Right ventricle myocardium inferior (tissue), 1 donor: ENCODE measurements at regions of chr20 and their contacts with region 1.

Region 1: DNA sequence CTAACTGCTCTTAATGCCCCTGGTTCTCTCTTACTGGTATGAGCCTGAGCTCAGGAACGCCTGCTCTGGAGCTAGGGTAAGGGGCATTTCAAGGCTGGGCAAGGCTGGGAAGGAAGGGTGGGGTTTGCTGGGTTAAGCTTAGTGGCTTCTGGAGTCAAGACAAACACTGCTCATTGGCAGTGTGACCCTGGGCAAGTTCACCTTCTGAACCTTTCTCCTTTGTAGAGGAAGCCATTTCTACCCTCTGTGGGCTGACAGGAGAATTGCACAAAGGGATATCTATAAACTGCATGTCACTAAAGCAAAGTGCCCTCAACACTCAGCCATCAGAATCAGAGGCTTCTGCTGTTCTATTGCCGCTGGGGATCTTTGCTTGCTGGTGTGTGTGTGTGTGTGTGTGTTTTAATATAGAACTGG is 20.3 kb upstream of the LRRN4 start:
- DNase-seq: no peak
- ATAC-seq: peak; percentile 81

Region 2: DNA sequence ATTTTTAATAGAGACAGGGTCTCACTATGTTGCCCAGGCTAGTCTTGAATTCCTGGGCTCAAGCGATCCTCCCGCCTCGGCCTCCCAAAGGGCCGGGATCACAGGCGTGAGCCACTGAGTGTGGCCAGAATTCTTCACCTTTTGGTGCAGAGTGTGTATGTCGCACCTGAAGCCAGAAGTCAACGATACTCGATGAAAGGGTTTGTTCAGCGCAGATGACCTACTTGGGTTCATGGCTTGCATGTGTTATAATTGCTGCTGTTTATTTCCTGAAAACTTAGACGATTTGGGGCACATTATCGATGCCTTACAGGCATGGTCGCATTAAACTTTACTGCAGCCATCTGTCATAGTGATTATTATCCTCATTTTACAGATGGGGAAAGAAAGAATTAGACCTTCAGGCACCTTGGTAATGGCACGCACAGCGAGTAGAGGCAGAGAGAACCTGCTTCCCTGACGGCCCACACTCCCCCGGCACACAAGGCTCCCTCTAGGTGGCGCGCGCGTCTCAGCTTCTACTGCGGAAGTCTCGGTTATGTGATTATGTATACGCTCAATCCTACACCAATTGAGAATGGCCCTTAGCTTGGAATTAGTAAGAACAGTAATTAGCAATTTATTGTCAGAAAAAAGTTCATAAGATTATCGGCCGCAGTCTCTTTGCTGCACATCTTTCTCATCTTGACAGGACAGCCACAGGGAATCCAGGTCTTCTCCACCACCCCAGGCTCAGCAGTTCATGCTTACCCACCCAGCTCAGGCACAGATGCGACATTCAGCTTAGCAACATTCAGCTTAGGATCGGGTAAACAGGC is 544.6 kb before region 1 on chr20:
- intact Hi-C with region 1: loop called (anchors 1 kb)
- DNase-seq: peak; percentile 93
- ATAC-seq: peak; percentile 87

Region 3: DNA sequence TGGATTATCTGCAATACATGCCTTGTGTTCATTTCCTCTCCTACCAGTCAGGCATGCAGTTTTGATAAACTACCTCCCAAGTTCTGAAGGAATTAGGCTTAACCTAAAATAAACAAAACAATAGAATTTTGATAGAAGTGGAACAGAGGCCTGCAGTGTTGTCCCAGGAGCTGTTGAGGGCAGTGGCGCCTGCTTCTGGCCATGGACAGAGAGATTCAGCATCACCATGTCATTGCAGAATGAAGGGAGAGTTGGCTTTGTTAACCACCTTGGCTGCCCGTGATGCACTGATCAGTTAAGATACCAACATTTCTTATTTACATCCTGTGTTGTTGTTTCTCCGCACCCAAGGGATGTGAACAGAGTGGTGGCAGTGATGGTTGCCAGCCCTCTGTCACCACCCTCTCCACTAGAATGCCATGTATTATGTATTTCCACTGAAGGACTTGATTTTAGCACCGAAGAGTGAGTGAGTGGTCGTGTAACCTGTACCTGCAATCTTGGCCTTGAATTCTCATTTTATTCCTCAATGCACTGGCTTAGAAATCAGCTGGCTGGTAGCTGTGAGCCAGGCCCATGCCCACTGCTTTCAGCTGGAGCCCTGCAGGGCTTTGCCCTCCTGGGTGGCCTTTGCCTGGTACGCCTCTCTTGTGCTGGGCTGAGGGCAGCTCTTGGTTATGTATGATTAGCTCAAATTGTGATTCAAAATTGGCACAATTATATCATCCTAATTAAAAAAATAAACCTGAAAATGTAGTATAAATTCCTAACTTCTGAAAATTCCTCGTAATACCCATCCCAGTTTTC is 267.5 kb before region 1 on chr20:
- intact Hi-C with region 1: loop called (anchors 10 kb)
- DNase-seq: no peak
- ATAC-seq: peak; percentile 70

Region 4: DNA sequence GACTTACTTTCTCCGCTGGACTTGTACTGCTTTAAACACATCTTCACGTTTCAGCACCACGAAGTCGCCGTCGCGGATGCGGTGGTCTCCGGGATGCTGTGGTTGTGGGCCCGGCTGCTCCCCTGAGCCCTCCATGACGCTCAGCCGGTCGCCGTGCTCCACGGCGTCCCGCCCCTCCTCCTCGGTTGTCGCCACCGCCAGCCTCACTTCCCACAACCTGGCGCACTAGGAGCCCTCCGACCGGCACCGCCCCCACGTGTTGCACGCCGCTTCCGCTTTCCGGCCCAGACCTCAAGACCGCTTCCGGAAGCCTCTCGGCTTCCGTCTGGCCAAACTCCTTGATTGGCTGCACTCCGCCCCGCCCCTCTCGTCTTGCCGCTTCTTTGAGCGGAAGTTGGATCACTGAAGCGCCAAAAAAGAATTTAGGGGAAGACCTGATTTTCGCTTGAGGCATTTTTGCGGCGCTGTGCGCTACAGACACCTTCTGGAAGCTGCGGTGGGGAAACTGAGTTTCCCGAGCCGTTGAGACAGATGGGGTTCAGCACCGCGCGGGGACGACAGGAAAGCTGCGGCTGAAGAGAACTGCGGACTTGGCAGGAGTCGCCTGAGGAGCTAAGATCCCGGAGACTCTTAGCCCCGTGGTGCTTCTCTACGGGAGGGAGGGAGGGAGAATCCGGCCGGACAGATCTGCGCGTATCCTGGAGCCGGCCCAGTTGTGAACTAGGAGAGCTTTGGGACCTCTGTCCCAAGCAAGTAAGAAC is 123.7 kb before region 1 on chr20 and contains the starts of genes MCM8 and TRMT6:
- intact Hi-C with region 1: loop called (anchors 1 kb)
- DNase-seq: peak; percentile 99
- ATAC-seq: peak; percentile 99
- total RNA-seq, gene MCM8: 6.4 TPM
- total RNA-seq, gene TRMT6: 6.1 TPM

Region 5: DNA sequence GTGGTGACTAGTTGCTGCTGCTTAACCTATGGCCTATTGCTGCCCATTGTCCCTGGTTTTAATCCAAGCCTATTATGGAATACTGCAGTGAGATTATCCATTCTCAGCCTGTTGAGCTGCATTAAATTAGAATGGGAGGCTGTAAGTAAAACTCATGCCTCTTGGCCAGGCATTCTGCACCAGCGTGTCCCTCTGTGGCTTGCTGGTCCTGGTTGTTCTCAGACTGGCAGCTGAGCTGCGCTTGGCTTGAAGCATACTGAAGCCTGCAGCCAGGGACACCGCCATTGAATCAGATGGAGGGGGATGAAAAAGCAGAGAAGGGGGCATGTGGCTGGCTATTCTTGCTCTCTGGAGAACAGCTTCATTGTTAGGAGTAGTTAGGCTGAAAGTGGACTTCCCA is 35.9 kb before region 1 on chr20:
- intact Hi-C with region 1: loop called (anchors 2 kb)
- DNase-seq: peak; percentile 70
- ATAC-seq: peak; percentile 68